IMR-90 (cell line): ENCODE measurements at regions of chr7 and their contacts with region 1.

Region 1: GRCh38 chr7:11298220-11298619 is 324.5 kb downstream of the PHF14 start:
- DNase-seq: no peak
- ATAC-seq: no peak
- H3K4me3 ChIP-seq: no peak overlapping the region
- H3K27ac ChIP-seq: no peak overlapping the region
- H3K4me1 ChIP-seq: no peaks in the 10 kb centered on the region
- H3K27me3 ChIP-seq: no peaks in the 10 kb centered on the region
- CTCF ChIP-seq: no peak
- POLR2A ChIP-seq: no peak
- RAD21 ChIP-seq: no peak

Region 2: GRCh38 chr7:9718071-9718661 is 1580.1 kb before region 1 on chr7:
- CTCF ChIA-PET with region 1: no interaction called
- POLR2A ChIA-PET with region 1: interaction called, 31 read pairs
- dilution Hi-C with region 1: no loop called
- in situ Hi-C with region 1: no loop called
- intact Hi-C with region 1: no loop called
- DNase-seq: no peak
- ATAC-seq: no peak
- H3K4me3 ChIP-seq: no peak overlapping the region
- H3K27ac ChIP-seq: no peak overlapping the region
- H3K4me1 ChIP-seq: no peaks in the 10 kb centered on the region
- H3K27me3 ChIP-seq: no peaks in the 10 kb centered on the region
- CTCF ChIP-seq: no peak
- POLR2A ChIP-seq: no peak
- RAD21 ChIP-seq: no peak